HEK293 (cell line): ENCODE measurements at regions of chr5 and their contacts with region 1.

Region 1: DNA sequence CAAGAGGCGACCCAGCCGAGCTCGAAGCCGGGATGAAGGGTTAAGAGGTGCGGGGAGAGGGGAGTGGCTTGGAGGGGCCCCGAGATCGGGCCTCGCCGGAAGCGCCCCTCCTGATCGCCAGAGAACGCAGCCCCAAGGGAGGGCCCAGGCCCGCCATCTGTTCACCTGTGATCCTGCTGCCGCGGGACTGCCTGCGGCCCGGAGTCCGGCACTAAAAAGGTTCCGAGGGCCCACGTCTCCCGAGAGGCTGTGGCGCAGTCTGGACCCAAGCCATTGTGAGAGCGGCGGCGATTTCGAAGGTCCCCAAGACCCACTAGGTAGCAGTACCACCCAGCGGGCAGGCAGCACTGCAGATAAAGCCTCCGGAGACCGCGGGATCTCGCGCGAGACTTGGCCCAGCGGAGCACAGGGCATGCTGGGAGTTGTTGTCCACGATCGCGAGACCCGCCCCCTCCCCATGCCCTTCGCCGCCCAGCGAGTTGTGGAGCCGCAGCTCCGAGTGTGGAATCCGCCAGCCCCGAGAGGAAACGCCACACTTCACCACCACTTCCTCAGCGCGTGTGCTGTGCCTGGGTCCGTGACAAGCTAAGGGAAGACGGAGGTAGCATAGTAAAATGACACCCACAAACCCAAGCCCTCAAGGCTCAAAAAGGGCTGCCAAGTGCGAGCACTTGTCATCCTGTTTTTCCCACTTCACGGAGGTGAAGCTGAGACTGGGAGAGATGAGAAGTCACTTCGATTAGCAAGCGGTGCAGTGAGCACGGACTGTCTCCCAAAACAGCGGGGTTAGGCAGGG is at the start of gene KIAA1191:
- H3K4me3 ChIP-seq: peak within 1 kb of the TSS; percentile 98
- H3K27ac ChIP-seq: peak within 1 kb of the TSS; percentile 74
- H3K4me1 ChIP-seq: no peaks in the 10 kb centered on the region; the same call in 1 of the 2 replicates
- CTCF ChIP-seq: peak; percentile 77

Region 2: DNA sequence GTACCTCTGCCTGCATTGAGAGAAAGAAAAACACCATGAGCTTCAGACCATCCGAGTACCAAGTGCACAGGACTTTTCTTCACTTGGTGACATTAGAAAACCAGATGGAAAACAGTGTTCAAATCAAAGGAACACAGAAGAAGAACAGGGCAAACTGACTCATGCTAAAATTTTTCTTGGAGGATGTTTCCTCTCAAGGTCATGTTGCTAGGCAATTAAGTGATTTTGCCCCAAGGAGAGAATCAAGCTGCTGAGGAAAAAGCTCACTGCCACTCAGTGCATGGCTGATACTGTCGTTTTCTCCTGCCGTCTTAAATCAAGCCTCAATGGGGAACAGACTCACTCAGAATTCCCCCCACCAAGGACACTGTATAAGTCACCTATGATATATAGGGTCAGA is 181.3 kb before region 1 on chr5:
- CTCF ChIA-PET with region 1: no interaction called
- POLR2A ChIA-PET with region 1: no interaction called
- H3K4me3 ChIP-seq: no peak overlapping the region
- H3K27ac ChIP-seq: no peak overlapping the region
- H3K4me1 ChIP-seq: peaks cover 7% of the 10 kb centered on the region
- CTCF ChIP-seq: no peak

Region 3: DNA sequence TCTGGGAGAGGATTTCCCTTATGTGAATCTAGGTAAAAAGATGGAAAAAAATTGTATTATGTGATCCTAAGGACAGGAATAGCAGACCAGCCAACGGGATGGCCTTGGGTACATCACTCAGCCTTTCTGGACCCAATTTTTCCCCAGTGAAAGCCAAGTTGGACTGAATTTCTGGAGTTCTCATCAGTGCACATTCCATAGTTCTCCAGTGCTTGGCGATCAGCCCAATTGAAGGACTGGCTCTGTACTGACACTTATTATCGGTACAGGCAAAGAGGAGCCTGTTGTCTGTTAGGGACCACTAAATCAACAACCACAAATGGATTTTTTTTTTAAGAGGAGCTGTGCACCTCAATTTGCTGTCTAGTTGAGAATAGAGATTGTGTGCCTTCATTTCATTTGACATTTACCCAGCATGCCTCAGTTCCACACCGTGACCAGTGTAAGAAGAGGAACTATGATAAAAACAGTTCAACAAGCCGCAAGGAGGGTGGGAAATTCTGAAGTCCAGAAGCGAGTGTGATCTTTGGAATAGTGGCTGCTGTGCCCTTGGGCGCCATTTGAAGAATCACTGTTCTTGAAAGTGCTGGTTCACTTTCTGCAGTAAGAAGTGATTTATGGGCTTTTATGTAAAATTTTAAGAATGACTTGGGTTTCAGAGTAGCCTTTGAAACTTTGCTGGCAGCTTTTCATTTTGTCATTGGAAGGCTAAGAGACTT is 11.6 kb after region 1 on chr5:
- CTCF ChIA-PET with region 1: no interaction called
- POLR2A ChIA-PET with region 1: interaction called, 15 read pairs
- H3K4me3 ChIP-seq: no peak overlapping the region
- H3K27ac ChIP-seq: no peak overlapping the region
- H3K4me1 ChIP-seq: no peaks in the 10 kb centered on the region
- CTCF ChIP-seq: no peak